ENCODE measurements at regions of chr5 and their contacts with region 1.

Region 1: DNA sequence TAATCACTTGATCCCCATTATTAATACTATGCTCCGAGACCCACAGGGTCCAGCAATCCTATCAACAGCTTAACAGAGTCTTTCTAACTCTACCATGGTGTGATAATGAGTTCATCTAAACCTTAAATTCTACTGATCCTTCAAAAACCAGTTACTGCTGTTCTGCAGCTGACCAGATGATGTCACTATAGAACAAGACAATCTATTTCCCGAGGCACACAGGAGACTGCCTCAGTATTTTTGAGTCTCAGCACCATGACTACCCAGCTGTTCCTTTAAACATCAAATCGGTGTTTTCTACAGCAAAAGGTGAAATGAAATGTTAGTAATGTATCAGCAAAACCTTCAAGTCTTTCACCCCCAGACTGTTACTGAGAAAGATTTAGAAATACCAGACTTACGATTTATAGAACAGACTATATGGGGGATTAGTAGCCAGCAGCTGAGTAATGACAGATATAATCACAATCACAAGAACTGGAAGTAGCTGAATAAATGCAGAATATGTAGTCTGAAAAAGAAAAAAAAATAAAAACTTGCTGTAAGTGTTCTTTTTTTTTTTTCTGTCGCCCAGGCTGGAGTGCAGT is 16.9 kb downstream of the DNAJC18 start:
- DNase-seq: no peak
- ATAC-seq: peak; percentile 21

Region 2: DNA sequence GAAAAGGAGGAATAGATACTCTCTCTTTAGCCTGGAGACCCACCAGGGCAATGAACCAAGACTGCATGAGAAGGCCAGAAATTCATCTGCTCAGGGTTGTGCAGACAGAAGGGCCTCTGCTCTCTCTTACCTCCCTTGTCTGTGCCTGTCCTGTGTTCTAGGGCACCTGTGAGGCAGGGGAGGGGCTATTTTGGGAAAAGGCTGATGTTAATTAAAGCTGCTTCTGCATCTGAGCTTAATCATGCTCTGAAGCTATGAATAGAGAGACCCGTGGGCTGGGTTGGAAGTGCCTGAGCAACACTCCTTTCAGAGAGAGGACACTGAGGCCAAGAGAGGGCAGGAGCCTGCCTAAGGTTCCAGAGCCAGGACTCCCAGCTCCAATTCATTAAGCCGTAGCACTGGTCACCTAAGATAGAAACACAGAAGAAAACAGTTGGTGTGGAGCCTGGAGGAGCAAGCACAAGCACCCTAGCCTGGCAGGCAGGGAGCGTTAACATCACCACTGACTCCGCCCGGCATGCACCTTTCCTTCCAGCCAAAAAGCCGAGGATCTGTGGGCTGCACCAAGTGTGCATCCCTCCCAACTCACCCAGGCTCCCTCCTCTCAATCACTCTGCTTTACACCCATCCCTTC is 91.6 kb after region 1 on chr5:
- intact Hi-C with region 1: loop called (anchors 2 kb)
- DNase-seq: no peak
- ATAC-seq: no peak

Region 3: GRCh38 chr5:139619861-139620260 is 197.5 kb after region 1 on chr5:
- intact Hi-C with region 1: loop called (anchors 10 kb)
- DNase-seq: no peak
- ATAC-seq: no peak

Measured in Right ventricle myocardium superior (tissue), 1 donor.